Common myeloid progenitor, CD34-positive (primary cell): ENCODE measurements at regions of chr11 and their contacts with region 1.

Region 1: GRCh38 chr11:63536669-63537292 is at the start of gene PLAAT4:
- DNase-seq: peak; percentile 59 to 81 (median 74)
- H3K4me3 ChIP-seq: peak within 1 kb of the TSS; percentile 40 to 81 (median 73)
- H3K27ac ChIP-seq: peak within 1 kb of the TSS; percentile 12 to 73
- H3K4me1 ChIP-seq: peaks cover 2 to 45% (median 28%) of the 10 kb centered on the region in 4 experiments
- H3K27me3 ChIP-seq: no peaks in the 10 kb centered on the region

Region 2: GRCh38 chr11:63490551-63491239 is 46.1 kb before region 1 on chr11 and contains the start of gene PLAAT5:
- CTCF ChIA-PET with region 1: interaction called, 11 read pairs
- POLR2A ChIA-PET with region 1: no interaction called
- DNase-seq: peak in 2 of 3 donors; percentile 49 to 69
- H3K4me3 ChIP-seq: peak within 1 kb of the TSS; percentile 36 to 78 (median 65)
- H3K27ac ChIP-seq: peak within 1 kb of the TSS in 1 of 2 experiments; percentile 35
- H3K4me1 ChIP-seq: peaks cover 11 to 25% (median 16%) of the 10 kb centered on the region in 4 experiments
- H3K27me3 ChIP-seq: peaks cover 0 to 20% (median 13%) of the 10 kb centered on the region in 5 experiments

Region 3: GRCh38 chr11:63508009-63508408 is 28.8 kb before region 1 on chr11:
- CTCF ChIA-PET with region 1: interaction called, 13 read pairs
- POLR2A ChIA-PET with region 1: interaction called, 3 read pairs
- DNase-seq: peak; percentile 60 to 64 (median 63)
- H3K4me3 ChIP-seq: no peak overlapping the region
- H3K27ac ChIP-seq: no peak overlapping the region
- H3K4me1 ChIP-seq: peaks cover 15 to 64% (median 56%) of the 10 kb centered on the region in 4 experiments
- H3K27me3 ChIP-seq: peaks cover 0 to 3% (median 0%) of the 10 kb centered on the region in 5 experiments

Region 4: GRCh38 chr11:63614136-63614664 is 77.4 kb after region 1 on chr11 and contains the start of gene PLAAT3:
- CTCF ChIA-PET with region 1: no interaction called
- POLR2A ChIA-PET with region 1: no interaction called
- DNase-seq: peak; percentile 36 to 58 (median 40)
- H3K4me3 ChIP-seq: peak within 1 kb of the TSS; percentile 9 to 68 (median 59)
- H3K27ac ChIP-seq: no peak within 1 kb of the TSS
- H3K4me1 ChIP-seq: peaks cover 0 to 14% (median 12%) of the 10 kb centered on the region in 4 experiments
- H3K27me3 ChIP-seq: peaks cover 0 to 35% (median 17%) of the 10 kb centered on the region in 5 experiments